Activated CD4-positive, alpha-beta T cell treated with anti-CD3 and anti-CD28 coated beads for 36 hours (primary cell): ENCODE measurements at regions of chr7 and their contacts with region 1.

Region 1: GRCh38 chr7:47991741-47992311 is 12.4 kb upstream of the HUS1 start:
- DNase-seq: peak; percentile 93
- ATAC-seq: peak; percentile 97
- H3K4me3 Mint-ChIP-seq: peak overlapping the region; percentile 77
- H3K27ac Mint-ChIP-seq: peak overlapping the region; percentile 91
- H3K4me1 Mint-ChIP-seq: peaks cover 21% of the 10 kb centered on the region
- H3K27me3 Mint-ChIP-seq: no peaks in the 10 kb centered on the region

Region 2: DNA sequence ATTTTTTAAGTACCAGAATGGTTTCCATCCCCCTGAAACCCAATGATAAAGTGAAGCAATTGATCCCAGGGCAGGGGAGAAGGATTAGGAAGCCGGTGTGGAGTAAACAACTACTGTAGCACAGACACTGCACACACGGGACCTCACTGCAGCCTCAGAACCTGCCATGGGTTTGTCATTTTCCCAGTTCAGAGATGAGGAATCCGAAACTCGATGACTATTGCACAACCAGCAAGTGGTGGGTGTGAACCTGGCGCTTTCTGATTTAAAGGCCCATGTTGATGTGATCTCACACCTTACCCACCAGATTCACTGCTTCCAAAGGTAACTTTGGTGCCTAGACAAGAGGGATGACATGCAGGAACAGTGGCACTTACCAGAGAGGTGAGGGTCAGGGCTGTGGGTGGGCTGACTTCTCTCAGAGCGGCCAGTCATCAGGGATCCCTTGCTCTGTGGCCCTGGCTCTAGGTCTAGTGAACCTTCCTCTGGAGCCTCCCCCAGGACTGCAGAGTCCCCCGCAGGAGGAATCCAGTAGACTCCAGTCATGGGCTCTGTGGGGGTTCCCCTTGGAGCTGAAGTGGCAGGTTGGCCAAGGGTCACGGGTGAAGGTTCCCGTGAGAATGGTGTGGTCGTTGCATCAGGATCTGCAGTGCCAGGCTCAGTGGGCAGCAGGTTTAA is 106.4 kb before region 1 on chr7:
- CTCF ChIA-PET with region 1: no interaction called
- POLR2A ChIA-PET with region 1: no interaction called
- intact Hi-C with region 1: no loop called
- DNase-seq: peak; percentile 60
- ATAC-seq: peak; percentile 89
- H3K4me3 Mint-ChIP-seq: no peak overlapping the region
- H3K27ac Mint-ChIP-seq: no peak overlapping the region
- H3K4me1 Mint-ChIP-seq: peaks cover 4% of the 10 kb centered on the region
- H3K27me3 Mint-ChIP-seq: no peaks in the 10 kb centered on the region

Region 3: GRCh38 chr7:47979145-47979831 is 12.5 kb before region 1 on chr7 and contains the start of gene HUS1:
- CTCF ChIA-PET with region 1: interaction called, 12 read pairs
- POLR2A ChIA-PET with region 1: no interaction called
- intact Hi-C with region 1: loop called (anchors 1 kb)
- DNase-seq: peak; percentile 95
- ATAC-seq: peak; percentile 98
- H3K4me3 Mint-ChIP-seq: peak within 1 kb of the TSS; percentile 88
- H3K27ac Mint-ChIP-seq: peak within 1 kb of the TSS; percentile 98
- H3K4me1 Mint-ChIP-seq: peaks cover 25% of the 10 kb centered on the region
- H3K27me3 Mint-ChIP-seq: no peaks in the 10 kb centered on the region
- total RNA-seq, gene HUS1: 40.5 to 41.5 TPM

Region 4: DNA sequence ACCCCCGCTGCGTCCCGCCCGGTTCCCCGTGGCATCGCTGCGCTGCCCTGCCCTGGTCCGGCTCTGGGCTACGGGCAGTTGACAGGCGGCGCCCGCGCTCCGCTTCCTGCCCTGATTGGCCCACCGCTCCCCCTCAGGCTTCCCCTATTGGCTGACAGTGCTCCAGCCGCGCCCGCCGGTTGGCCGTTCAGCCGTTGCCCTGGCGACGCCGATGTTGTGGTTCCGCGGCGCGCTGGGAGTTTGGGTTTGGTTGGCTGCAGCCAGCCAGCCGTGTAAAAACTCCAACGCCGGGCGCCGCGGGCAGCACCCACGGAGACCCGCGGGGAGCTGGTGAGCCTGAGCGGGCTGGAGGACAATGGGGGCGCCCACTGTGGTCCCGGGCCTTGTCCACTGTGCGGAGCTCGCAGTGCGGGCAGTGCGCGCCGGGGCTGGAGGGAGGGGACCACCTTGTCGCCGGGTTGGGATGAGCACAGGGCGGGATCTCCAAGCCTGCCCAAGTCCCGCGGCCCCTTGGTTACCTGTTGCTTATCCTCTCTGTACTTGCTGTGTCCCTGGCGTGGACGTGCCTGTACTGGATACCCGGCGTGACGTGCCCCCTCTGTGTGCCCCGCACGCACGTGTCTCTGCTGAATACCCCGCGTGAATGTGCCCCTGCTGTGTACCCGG is 43.6 kb after region 1 on chr7 and contains the start of gene C7orf57:
- CTCF ChIA-PET with region 1: no interaction called
- POLR2A ChIA-PET with region 1: no interaction called
- intact Hi-C with region 1: loop called (anchors 2 to 5 kb)
- DNase-seq: peak; percentile 92
- ATAC-seq: peak; percentile 100
- H3K4me3 Mint-ChIP-seq: peak within 1 kb of the TSS; percentile 71
- H3K27ac Mint-ChIP-seq: no peak within 1 kb of the TSS
- H3K4me1 Mint-ChIP-seq: peaks cover 5% of the 10 kb centered on the region
- H3K27me3 Mint-ChIP-seq: peaks cover 36% of the 10 kb centered on the region
- total RNA-seq, gene C7orf57: 0.33 to 0.46 TPM

Region 5: GRCh38 chr7:48101968-48102367 is 110.1 kb after region 1 on chr7:
- CTCF ChIA-PET with region 1: interaction called, 18 read pairs
- POLR2A ChIA-PET with region 1: no interaction called
- intact Hi-C with region 1: no loop called
- DNase-seq: peak; percentile 65
- ATAC-seq: peak; percentile 25
- H3K4me3 Mint-ChIP-seq: no peak overlapping the region
- H3K27ac Mint-ChIP-seq: no peak overlapping the region
- H3K4me1 Mint-ChIP-seq: peaks cover 29% of the 10 kb centered on the region
- H3K27me3 Mint-ChIP-seq: no peaks in the 10 kb centered on the region

Region 6: DNA sequence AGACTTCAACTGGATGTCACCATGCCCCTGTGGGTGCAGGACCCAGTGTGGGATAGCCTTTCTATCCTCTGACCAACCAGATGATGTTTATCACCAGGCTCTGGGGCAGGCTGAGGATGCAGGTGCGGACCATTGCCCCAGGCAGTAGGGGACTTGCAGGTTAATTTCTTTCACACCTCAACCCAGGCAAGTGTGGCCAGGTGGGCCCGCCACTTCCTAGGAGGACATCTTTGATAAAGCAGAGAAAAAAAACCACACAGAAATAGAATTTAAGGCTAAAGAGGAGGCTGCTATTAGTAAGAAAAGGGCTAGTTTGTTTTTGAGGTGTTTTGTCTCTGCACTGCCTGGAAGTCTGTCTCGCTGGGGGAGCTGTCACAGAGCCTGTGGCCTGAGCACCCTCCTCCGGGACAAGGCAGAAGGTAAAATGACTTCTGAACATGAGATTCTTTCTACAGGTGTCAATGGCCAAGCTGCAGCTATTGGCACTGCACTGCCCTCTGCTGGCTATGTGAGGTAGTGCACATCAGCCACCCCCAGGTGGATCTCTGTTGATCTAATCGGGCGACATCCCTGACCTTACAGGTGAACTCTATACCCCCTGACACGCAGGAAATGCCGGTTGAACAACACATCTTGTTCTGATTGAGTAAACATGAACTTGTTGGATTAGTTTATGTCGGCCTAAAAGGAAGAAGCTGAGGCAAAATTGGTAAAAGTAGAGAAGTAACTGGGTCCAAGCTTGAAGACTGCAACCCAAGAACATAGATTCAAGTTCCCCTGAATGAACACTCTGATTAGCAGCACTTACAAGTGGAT is 118.2 kb after region 1 on chr7:
- CTCF ChIA-PET with region 1: interaction called, 33 read pairs
- POLR2A ChIA-PET with region 1: no interaction called
- intact Hi-C with region 1: loop called (anchors 1 kb)
- DNase-seq: peak; percentile 93
- ATAC-seq: peak; percentile 93
- H3K4me3 Mint-ChIP-seq: no peak overlapping the region
- H3K27ac Mint-ChIP-seq: no peak overlapping the region
- H3K4me1 Mint-ChIP-seq: peaks cover 10% of the 10 kb centered on the region
- H3K27me3 Mint-ChIP-seq: no peaks in the 10 kb centered on the region

Region 7: DNA sequence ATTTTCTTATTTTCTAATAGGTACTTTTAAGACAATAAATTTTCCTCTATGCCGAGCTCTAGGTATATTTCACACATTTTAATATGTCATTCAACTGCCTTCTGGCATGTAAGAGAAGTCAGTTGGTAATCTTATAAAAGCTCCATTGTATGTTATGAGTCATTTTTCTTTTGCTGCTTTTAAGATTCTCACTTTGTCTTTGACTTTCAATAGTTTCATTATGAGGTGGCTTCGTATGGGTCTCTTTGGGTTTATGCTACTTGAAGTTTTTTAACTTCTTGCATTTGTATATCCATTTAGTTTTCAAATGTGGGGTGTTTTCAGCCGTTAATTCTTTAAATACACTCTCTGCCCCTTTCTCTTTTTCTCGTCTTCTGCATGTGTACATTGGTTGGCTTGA is 259.9 kb after region 1 on chr7:
- CTCF ChIA-PET with region 1: no interaction called
- POLR2A ChIA-PET with region 1: no interaction called
- intact Hi-C with region 1: loop called in 1 of 2 experiments (anchors 10 kb)
- DNase-seq: no peak
- ATAC-seq: peak; percentile 76
- H3K4me3 Mint-ChIP-seq: no peak overlapping the region
- H3K27ac Mint-ChIP-seq: no peak overlapping the region
- H3K4me1 Mint-ChIP-seq: peaks cover 14% of the 10 kb centered on the region
- H3K27me3 Mint-ChIP-seq: peaks cover 13% of the 10 kb centered on the region